ENCODE measurements at regions of chr2 and their contacts with region 1.

Region 1: GRCh38 chr2:219029829-219030165 is 11.5 kb downstream of the CFAP65 start:
- DNase-seq: peak; percentile 92
- CTCF ChIP-seq: peak; percentile 90

Region 2: GRCh38 chr2:218466016-218466521 is 563.7 kb before region 1 on chr2:
- in situ Hi-C with region 1: no loop called
- DNase-seq: no peak
- CTCF ChIP-seq: no peak

Region 3: GRCh38 chr2:219308142-219309093 is 278.6 kb after region 1 on chr2:
- in situ Hi-C with region 1: loop called (anchors 25 kb)
- DNase-seq: peak; percentile 86
- CTCF ChIP-seq: no peak

Measured in GM13976 (cell line).